ENCODE measurements at regions of chr1 and their contacts with region 1.

Region 1: DNA sequence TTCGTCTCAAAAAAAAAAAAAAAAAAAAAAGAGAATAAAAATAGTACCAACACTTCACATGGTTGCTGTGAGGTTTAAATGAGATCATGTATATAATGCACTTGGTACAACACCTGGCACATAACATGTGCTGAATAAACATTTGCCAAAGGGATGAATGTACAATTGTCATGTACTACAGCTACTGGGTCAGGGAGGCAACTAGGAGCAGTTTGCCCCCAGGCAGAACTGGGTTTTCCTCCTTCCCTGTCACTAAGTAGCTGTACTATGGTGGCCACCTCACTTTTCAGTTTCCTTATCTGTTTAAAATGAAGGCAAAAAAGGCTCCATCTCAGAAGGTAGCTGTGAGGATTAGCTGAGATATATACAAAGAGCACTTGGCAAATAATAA is 11.5 kb downstream of the AK2 start:
- DNase-seq: no peak
- ATAC-seq: no peak
- H3K4me3 Mint-ChIP-seq: no peak overlapping the region
- H3K27ac Mint-ChIP-seq: peak overlapping the region; percentile 67
- H3K4me1 Mint-ChIP-seq: peaks cover 51% of the 10 kb centered on the region
- H3K27me3 Mint-ChIP-seq: no peaks in the 10 kb centered on the region

Region 2: GRCh38 chr1:32636914-32637645 is 388.1 kb before region 1 on chr1:
- CTCF ChIA-PET with region 1: no interaction called
- POLR2A ChIA-PET with region 1: no interaction called
- intact Hi-C with region 1: no loop called
- DNase-seq: no peak
- ATAC-seq: no peak
- H3K4me3 Mint-ChIP-seq: no peak overlapping the region
- H3K27ac Mint-ChIP-seq: no peak overlapping the region
- H3K4me1 Mint-ChIP-seq: peaks cover 4% of the 10 kb centered on the region
- H3K27me3 Mint-ChIP-seq: no peaks in the 10 kb centered on the region

Region 3: GRCh38 chr1:32899586-32900296 is 125.4 kb before region 1 on chr1:
- CTCF ChIA-PET with region 1: no interaction called
- POLR2A ChIA-PET with region 1: interaction called, 10 read pairs
- intact Hi-C with region 1: no loop called
- DNase-seq: no peak
- ATAC-seq: no peak
- H3K4me3 Mint-ChIP-seq: no peak overlapping the region
- H3K27ac Mint-ChIP-seq: no peak overlapping the region
- H3K4me1 Mint-ChIP-seq: peaks cover 6% of the 10 kb centered on the region
- H3K27me3 Mint-ChIP-seq: peaks cover 42% of the 10 kb centered on the region

Region 4: DNA sequence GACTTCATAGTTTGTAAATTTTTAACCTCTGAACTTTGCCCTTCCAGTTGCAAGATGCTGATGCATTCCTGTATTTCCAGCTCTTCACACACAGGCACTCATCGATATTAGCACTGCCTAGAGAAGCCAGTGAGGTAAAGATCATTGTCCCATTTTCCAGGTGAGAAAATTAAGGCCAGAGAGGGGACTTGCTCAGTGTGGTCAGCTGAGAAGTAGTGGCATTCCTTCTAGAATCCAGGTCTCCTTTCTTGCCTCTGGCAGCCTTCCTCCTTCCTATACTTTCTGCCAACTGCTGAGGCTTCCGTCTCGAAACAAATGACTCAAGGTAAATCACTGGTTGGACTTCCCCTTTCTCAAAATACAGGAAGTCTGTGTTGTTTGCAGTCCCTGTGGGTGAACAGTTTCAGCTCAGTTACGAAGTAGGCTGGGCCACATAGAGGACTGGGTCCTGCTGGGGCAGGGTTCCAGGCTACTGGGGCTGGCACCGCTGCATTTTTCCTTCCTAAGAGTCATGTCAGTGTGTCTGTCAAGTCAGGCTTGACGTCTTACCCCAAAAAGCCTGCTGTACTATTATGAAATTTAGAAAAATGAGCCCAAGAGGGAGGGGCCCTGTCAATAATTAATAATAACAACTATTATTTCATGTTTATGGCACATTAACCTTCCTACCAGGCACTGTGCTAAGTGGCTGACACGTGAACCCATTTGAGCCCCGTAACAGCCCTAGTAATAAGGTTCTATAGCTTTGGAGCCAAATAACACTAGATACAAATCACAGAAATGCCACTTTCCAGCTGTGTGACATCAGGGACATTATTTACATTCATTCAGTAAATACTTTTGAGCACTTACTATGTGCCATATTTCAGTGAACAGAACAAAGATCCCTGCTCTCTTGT is 43.9 kb before region 1 on chr1:
- CTCF ChIA-PET with region 1: no interaction called
- POLR2A ChIA-PET with region 1: no interaction called
- intact Hi-C with region 1: loop called (anchors 1 kb)
- DNase-seq: peak; percentile 78
- ATAC-seq: peak; percentile 94
- H3K4me3 Mint-ChIP-seq: peak overlapping the region; percentile 37
- H3K27ac Mint-ChIP-seq: peak overlapping the region; percentile 84
- H3K4me1 Mint-ChIP-seq: peaks cover 58% of the 10 kb centered on the region
- H3K27me3 Mint-ChIP-seq: no peaks in the 10 kb centered on the region

Region 5: GRCh38 chr1:32992489-32993323 is 32.5 kb before region 1 on chr1:
- CTCF ChIA-PET with region 1: no interaction called
- POLR2A ChIA-PET with region 1: no interaction called
- intact Hi-C with region 1: loop called in 1 of 2 experiments (anchors 2 kb)
- DNase-seq: peak; percentile 87
- ATAC-seq: peak; percentile 88
- H3K4me3 Mint-ChIP-seq: no peak overlapping the region
- H3K27ac Mint-ChIP-seq: peak overlapping the region; percentile 79
- H3K4me1 Mint-ChIP-seq: peaks cover 43% of the 10 kb centered on the region
- H3K27me3 Mint-ChIP-seq: no peaks in the 10 kb centered on the region

Region 6: DNA sequence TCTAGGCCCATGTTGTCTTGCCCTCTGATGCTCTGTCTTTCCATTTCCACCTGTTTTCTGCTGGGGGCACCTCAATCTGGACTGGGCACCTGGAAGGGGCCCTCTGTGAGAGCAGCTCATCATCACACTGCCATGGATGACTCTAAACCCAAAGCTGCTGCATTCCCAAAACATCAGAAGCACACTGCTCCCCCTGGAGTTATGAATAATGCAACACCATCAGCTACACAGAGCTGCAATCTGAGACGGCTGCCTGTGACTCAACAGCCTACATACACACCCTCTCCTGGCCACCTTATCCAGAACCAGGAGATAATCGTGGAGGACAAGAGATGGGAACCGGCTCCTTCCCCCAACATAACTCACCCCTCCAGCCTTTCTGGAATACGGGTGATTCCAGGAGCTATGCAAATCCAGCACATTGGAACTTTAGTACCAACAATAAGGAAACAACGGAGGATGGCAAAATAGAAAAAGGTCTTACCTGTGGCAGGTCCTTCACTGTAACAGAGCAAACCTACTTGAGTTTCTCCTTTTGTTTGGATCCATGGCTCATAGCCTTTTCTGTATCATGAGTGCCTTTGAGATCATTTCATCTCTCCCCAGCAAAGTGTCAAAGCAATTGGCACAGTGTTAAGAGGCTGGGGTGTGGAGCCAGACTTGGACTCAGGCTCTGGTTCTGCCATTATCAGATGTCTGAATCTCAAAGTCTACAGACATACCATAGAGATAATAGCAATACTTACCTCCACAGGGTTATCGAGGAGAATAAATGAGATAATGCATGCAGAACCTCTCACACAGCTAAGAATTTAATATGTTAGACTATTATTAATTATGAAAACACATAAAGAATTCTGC is 17.8 kb before region 1 on chr1:
- CTCF ChIA-PET with region 1: interaction called, 4 read pairs
- POLR2A ChIA-PET with region 1: interaction called, 3 read pairs
- intact Hi-C with region 1: loop called in 1 of 2 experiments (anchors 2 kb)
- DNase-seq: peak; percentile 29
- ATAC-seq: peak; percentile 23
- H3K4me3 Mint-ChIP-seq: no peak overlapping the region
- H3K27ac Mint-ChIP-seq: no peak overlapping the region
- H3K4me1 Mint-ChIP-seq: peaks cover 15% of the 10 kb centered on the region
- H3K27me3 Mint-ChIP-seq: no peaks in the 10 kb centered on the region

Region 7: GRCh38 chr1:33055210-33056008 is 30.2 kb after region 1 on chr1:
- CTCF ChIA-PET with region 1: interaction called, 4 read pairs
- POLR2A ChIA-PET with region 1: interaction called, 3 read pairs
- intact Hi-C with region 1: loop called in 1 of 2 experiments (anchors 2 kb)
- DNase-seq: peak; percentile 45
- ATAC-seq: peak; percentile 77
- H3K4me3 Mint-ChIP-seq: no peak overlapping the region
- H3K27ac Mint-ChIP-seq: no peak overlapping the region
- H3K4me1 Mint-ChIP-seq: peaks cover 5% of the 10 kb centered on the region
- H3K27me3 Mint-ChIP-seq: peaks cover 5% of the 10 kb centered on the region

Region 8: GRCh38 chr1:33306648-33307493 is 281.7 kb after region 1 on chr1:
- CTCF ChIA-PET with region 1: no interaction called
- POLR2A ChIA-PET with region 1: no interaction called
- intact Hi-C with region 1: no loop called
- DNase-seq: peak; percentile 21
- ATAC-seq: no peak
- H3K4me3 Mint-ChIP-seq: no peak overlapping the region
- H3K27ac Mint-ChIP-seq: no peak overlapping the region
- H3K4me1 Mint-ChIP-seq: peaks cover 7% of the 10 kb centered on the region
- H3K27me3 Mint-ChIP-seq: peaks cover 10% of the 10 kb centered on the region

Region 9: GRCh38 chr1:33365560-33365997 is 340.4 kb after region 1 on chr1:
- CTCF ChIA-PET with region 1: no interaction called
- POLR2A ChIA-PET with region 1: no interaction called
- intact Hi-C with region 1: no loop called
- DNase-seq: no peak
- ATAC-seq: no peak
- H3K4me3 Mint-ChIP-seq: no peak overlapping the region
- H3K27ac Mint-ChIP-seq: no peak overlapping the region
- H3K4me1 Mint-ChIP-seq: peaks cover 5% of the 10 kb centered on the region
- H3K27me3 Mint-ChIP-seq: no peaks in the 10 kb centered on the region